CD14-positive monocyte (primary cell): ENCODE measurements at regions of chr7 and their contacts with region 1.

Region 1: DNA sequence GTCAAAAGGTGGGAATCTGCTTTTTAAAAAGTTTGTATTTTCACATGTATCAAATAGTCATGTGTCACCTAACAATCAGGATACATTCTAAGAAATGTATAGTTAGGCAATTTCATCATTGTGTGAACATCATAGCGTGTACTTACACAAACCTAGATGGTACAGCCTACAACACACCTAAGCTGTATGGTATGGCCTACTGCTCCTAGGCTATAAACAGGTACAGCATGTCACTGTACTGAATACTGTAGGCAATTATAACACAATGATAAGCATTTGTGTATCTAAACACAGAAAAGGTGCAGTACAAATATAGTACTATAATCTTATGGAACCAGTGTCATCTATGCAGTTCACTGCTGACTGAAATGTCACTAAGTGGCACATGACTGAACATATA is 17.8 kb downstream of the COA1 start:
- DNase-seq: no peak
- H3K4me3 ChIP-seq: no peak overlapping the region
- H3K4me3 Mint-ChIP-seq: no peak overlapping the region
- H3K27ac ChIP-seq: no peak overlapping the region
- H3K27ac Mint-ChIP-seq: no peak overlapping the region
- H3K4me1 ChIP-seq: peaks cover 0 to 2% of the 10 kb centered on the region in 2 donors
- H3K4me1 Mint-ChIP-seq: peaks cover 7% of the 10 kb centered on the region
- H3K27me3 ChIP-seq: no peaks in the 10 kb centered on the region
- H3K27me3 Mint-ChIP-seq: peaks cover 0 to 3% (median 0%) of the 10 kb centered on the region in 3 donors
- CTCF ChIP-seq: no peak

Region 2: GRCh38 chr7:42262964-42263363 is 1448.5 kb before region 1 on chr7:
- intact Hi-C with region 1: no loop called
- DNase-seq: no peak
- H3K4me3 ChIP-seq: no peak overlapping the region
- H3K4me3 Mint-ChIP-seq: no peak overlapping the region
- H3K27ac ChIP-seq: no peak overlapping the region
- H3K27ac Mint-ChIP-seq: no peak overlapping the region
- H3K4me1 ChIP-seq: no peaks in the 10 kb centered on the region
- H3K4me1 Mint-ChIP-seq: no peaks in the 10 kb centered on the region
- H3K27me3 ChIP-seq: peaks cover 0 to 2% of the 10 kb centered on the region in 2 donors
- H3K27me3 Mint-ChIP-seq: peaks cover 0 to 3% (median 2%) of the 10 kb centered on the region in 3 donors
- CTCF ChIP-seq: no peak

Region 3: GRCh38 chr7:43454936-43455518 is 256.5 kb before region 1 on chr7:
- intact Hi-C with region 1: loop called in 1 of 2 experiments (anchors 10 kb)
- DNase-seq: peak in 1 of 3 donors; percentile 16
- H3K4me3 ChIP-seq: no peak overlapping the region
- H3K4me3 Mint-ChIP-seq: peak overlapping the region in 1 of 2 donors; percentile 47
- H3K27ac ChIP-seq: no peak overlapping the region
- H3K27ac Mint-ChIP-seq: no peak overlapping the region
- H3K4me1 ChIP-seq: peaks cover 0 to 5% of the 10 kb centered on the region in 2 donors
- H3K4me1 Mint-ChIP-seq: peaks cover 14% of the 10 kb centered on the region
- H3K27me3 ChIP-seq: no peaks in the 10 kb centered on the region
- H3K27me3 Mint-ChIP-seq: peaks cover under 1 to 5% (median 4%) of the 10 kb centered on the region in 3 donors
- CTCF ChIP-seq: peak; percentile 72

Region 4: DNA sequence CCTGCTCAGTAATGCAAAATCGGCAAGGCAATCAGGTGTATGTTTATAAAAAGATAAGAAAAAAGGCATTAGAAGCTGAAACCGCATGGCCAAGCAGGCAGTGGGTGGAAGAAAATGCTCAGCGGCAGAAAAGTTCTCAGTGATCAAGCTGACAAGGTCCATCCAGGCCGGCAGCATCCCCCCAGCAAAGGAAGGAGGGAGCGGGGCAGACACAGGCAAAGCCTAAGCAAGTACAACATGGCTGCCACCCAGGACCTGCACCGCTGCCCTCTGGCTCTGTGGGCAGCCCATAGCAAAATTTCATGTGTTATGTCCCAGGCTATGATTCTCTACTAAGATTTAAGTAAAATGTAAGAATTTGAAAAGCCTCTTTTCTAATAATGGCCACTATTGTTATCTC is 112.4 kb after region 1 on chr7:
- intact Hi-C with region 1: no loop called
- DNase-seq: no peak
- H3K4me3 ChIP-seq: no peak overlapping the region
- H3K4me3 Mint-ChIP-seq: no peak overlapping the region
- H3K27ac ChIP-seq: no peak overlapping the region
- H3K27ac Mint-ChIP-seq: no peak overlapping the region
- H3K4me1 ChIP-seq: peaks cover 8 to 10% of the 10 kb centered on the region in 2 donors
- H3K4me1 Mint-ChIP-seq: peaks cover 16% of the 10 kb centered on the region
- H3K27me3 ChIP-seq: peaks cover 0 to 4% of the 10 kb centered on the region in 2 donors
- H3K27me3 Mint-ChIP-seq: peaks cover 1 to 2% (median 2%) of the 10 kb centered on the region in 3 donors
- CTCF ChIP-seq: no peak